Activated CD4-positive, alpha-beta T cell treated with anti-CD3 and anti-CD28 coated beads, Interleukin-2, amount 10 ng/mL, durations not matched to agents 24 days and 14 days (primary cell): ENCODE measurements at regions of chr1 and their contacts with region 1.

Region 1: GRCh38 chr1:183915625-183916510 is 110.9 kb downstream of the RGL1 start:
- DNase-seq: peak; percentile 92
- H3K4me3 Mint-ChIP-seq: no peak overlapping the region
- H3K27ac Mint-ChIP-seq: no peak overlapping the region
- H3K4me1 Mint-ChIP-seq: peaks cover 15% of the 10 kb centered on the region
- H3K27me3 Mint-ChIP-seq: no peaks in the 10 kb centered on the region

Region 2: GRCh38 chr1:183543619-183544204 is 372.2 kb before region 1 on chr1:
- intact Hi-C with region 1: no loop called
- DNase-seq: peak; percentile 77
- H3K4me3 Mint-ChIP-seq: no peak overlapping the region
- H3K27ac Mint-ChIP-seq: peak overlapping the region; percentile 12
- H3K4me1 Mint-ChIP-seq: peaks cover 12% of the 10 kb centered on the region
- H3K27me3 Mint-ChIP-seq: no peaks in the 10 kb centered on the region

Region 3: DNA sequence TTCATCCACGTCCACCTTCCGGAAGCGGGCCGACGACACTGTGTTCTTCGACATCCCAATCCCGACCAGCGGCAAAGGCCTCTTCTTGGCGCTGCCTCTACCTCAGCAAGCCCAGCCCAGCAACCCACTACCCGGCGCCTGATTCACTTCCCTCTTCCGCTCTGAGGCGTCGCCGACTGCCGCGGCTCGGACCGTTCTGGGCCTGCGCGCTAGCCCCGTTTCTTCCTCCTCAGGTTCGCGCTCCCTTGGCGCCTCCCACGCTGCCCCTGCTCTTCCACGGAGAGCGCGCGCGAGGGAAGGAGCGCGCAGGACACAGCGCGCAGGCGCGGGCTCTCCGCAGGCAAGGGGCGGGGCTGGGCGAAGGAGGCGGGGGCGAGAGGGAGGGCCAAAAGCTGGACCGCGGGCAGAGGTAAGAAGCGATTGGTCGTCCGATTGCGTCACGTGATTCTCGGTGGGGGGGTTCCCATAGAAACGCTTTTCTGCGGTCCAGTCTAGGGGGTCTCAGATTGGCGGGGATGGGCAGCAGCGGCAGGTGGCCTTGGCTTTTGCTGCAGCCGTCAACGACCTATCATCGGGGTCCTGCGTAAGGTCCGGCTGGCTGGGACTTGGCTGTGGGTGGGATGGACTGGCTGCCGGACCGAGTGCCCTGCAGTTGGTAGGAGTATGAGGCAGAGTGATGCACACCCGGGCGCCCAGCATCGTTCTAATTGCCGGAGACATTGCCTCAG is 280.1 kb before region 1 on chr1 and contains the start of gene ARPC5:
- intact Hi-C with region 1: loop called (anchors 1 kb)
- DNase-seq: peak; percentile 99
- H3K4me3 Mint-ChIP-seq: peak within 1 kb of the TSS; percentile 98
- H3K27ac Mint-ChIP-seq: peak within 1 kb of the TSS; percentile 100
- H3K4me1 Mint-ChIP-seq: peaks cover 29% of the 10 kb centered on the region
- H3K27me3 Mint-ChIP-seq: peaks cover 11% of the 10 kb centered on the region
- total RNA-seq, gene ARPC5: 144 and 149 TPM in 2 replicates

Region 4: GRCh38 chr1:183685112-183685713 is 230.7 kb before region 1 on chr1:
- intact Hi-C with region 1: loop called (anchors 1 kb)
- DNase-seq: peak; percentile 78
- H3K4me3 Mint-ChIP-seq: no peak overlapping the region
- H3K27ac Mint-ChIP-seq: no peak overlapping the region
- H3K4me1 Mint-ChIP-seq: peaks cover 11% of the 10 kb centered on the region
- H3K27me3 Mint-ChIP-seq: peaks cover 30% of the 10 kb centered on the region

Region 5: GRCh38 chr1:183841950-183842794 is 73.7 kb before region 1 on chr1:
- intact Hi-C with region 1: loop called (anchors 2 kb)
- DNase-seq: peak; percentile 78
- H3K4me3 Mint-ChIP-seq: peak overlapping the region; percentile 65
- H3K27ac Mint-ChIP-seq: peak overlapping the region; percentile 93
- H3K4me1 Mint-ChIP-seq: peaks cover 26% of the 10 kb centered on the region
- H3K27me3 Mint-ChIP-seq: no peaks in the 10 kb centered on the region

Region 6: DNA sequence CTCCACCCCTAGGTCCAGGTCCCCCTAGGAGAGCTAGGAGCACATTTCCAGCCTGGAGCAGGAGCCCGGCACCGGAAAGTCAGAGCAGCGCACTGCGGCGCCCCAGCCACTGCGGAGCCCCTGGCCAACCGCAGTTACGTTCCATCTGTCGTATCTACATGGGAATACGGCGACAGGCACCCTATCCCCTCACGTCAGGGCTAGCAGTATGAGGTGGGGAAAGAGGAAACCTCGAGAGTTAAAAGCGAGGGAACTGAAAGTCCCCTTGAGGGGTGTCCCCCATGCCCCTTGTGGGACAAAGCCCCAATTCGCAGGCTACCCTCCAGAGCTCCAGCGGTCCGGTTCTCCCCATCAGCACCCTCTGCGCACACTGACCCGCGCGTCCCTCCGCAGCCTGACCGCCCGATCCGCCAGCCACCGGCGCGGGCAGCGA is 120.7 kb after region 1 on chr1:
- intact Hi-C with region 1: loop called (anchors 10 kb)
- DNase-seq: peak; percentile 64
- H3K4me3 Mint-ChIP-seq: peak overlapping the region; percentile 69
- H3K27ac Mint-ChIP-seq: no peak overlapping the region
- H3K4me1 Mint-ChIP-seq: peaks cover 14% of the 10 kb centered on the region
- H3K27me3 Mint-ChIP-seq: peaks cover 71% of the 10 kb centered on the region

Region 7: GRCh38 chr1:184163674-184164465 is 248.0 kb after region 1 on chr1:
- intact Hi-C with region 1: loop called (anchors 5 kb)
- DNase-seq: peak; percentile 61
- H3K4me3 Mint-ChIP-seq: no peak overlapping the region
- H3K27ac Mint-ChIP-seq: no peak overlapping the region
- H3K4me1 Mint-ChIP-seq: peaks cover 16% of the 10 kb centered on the region
- H3K27me3 Mint-ChIP-seq: peaks cover 2% of the 10 kb centered on the region